ENCODE measurements at regions of chr1 and their contacts with region 1.

Region 1: GRCh38 chr1:64469977-64470664 is at the start of gene CACHD1:
- DNase-seq: peak; percentile 63
- H3K4me3 ChIP-seq: peak within 1 kb of the TSS; percentile 58 to 70 (median 67)
- H3K27ac ChIP-seq: peak within 1 kb of the TSS; percentile 76 to 89 (median 82)
- H3K4me1 ChIP-seq: peaks cover 4 to 31% (median 20%) of the 10 kb centered on the region in 4 donors
- H3K27me3 ChIP-seq: peaks cover 52% of the 10 kb centered on the region
- CTCF ChIP-seq: peak; percentile 17 to 32 (median 27)
- EP300 ChIP-seq: no peak
- POLR2A ChIP-seq: no peak
- total RNA-seq, gene CACHD1: 1.6 to 3.2 (median 2.2) TPM in 3 of 4 donors, not detected in the other

Region 2: GRCh38 chr1:64453688-64454087 is 16.4 kb before region 1 on chr1:
- in situ Hi-C with region 1: no loop called
- intact Hi-C with region 1: no loop called
- DNase-seq: no peak
- H3K4me3 ChIP-seq: no peak overlapping the region
- H3K27ac ChIP-seq: no peak overlapping the region
- H3K4me1 ChIP-seq: no peaks in the 10 kb centered on the region
- H3K27me3 ChIP-seq: no peaks in the 10 kb centered on the region
- CTCF ChIP-seq: no peak
- EP300 ChIP-seq: no peak
- POLR2A ChIP-seq: no peak

Region 3: DNA sequence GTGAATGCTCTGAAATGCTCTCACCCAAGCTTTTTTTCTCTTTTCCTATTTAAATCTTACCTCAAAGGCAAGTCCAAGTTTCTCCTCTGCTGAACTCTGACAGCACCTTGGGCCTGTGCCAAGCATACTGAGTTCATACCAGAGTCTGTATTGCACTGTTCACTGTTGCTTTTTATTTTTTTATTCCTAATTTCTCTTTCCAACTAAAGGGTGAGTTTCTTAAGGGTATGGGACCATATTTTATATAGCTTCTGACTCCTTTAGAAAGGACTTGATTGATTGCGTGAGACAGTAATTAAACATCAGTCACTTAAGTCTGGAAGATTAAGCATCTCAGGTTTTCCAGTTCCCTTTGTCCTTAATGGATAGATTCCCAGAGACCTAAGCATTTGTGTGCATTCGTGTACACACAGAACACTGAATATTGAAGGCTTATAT is 69.7 kb after region 1 on chr1:
- in situ Hi-C with region 1: no loop called
- intact Hi-C with region 1: loop called (anchors 10 kb)
- DNase-seq: peak; percentile 52
- H3K4me3 ChIP-seq: no peak overlapping the region
- H3K27ac ChIP-seq: peak overlapping the region; percentile 2 to 35 (median 27)
- H3K4me1 ChIP-seq: peaks cover 10 to 39% (median 24%) of the 10 kb centered on the region in 4 donors
- H3K27me3 ChIP-seq: no peaks in the 10 kb centered on the region
- CTCF ChIP-seq: no peak
- EP300 ChIP-seq: no peak
- POLR2A ChIP-seq: no peak

Region 4: GRCh38 chr1:64663668-64664067 is 193.5 kb after region 1 on chr1:
- in situ Hi-C with region 1: loop called in 2 of 4 experiments (anchors 25 kb)
- intact Hi-C with region 1: no loop called
- DNase-seq: no peak
- H3K4me3 ChIP-seq: no peak overlapping the region
- H3K27ac ChIP-seq: no peak overlapping the region
- H3K4me1 ChIP-seq: no peaks in the 10 kb centered on the region
- H3K27me3 ChIP-seq: no peaks in the 10 kb centered on the region
- CTCF ChIP-seq: no peak
- EP300 ChIP-seq: no peak
- POLR2A ChIP-seq: no peak

Region 5: DNA sequence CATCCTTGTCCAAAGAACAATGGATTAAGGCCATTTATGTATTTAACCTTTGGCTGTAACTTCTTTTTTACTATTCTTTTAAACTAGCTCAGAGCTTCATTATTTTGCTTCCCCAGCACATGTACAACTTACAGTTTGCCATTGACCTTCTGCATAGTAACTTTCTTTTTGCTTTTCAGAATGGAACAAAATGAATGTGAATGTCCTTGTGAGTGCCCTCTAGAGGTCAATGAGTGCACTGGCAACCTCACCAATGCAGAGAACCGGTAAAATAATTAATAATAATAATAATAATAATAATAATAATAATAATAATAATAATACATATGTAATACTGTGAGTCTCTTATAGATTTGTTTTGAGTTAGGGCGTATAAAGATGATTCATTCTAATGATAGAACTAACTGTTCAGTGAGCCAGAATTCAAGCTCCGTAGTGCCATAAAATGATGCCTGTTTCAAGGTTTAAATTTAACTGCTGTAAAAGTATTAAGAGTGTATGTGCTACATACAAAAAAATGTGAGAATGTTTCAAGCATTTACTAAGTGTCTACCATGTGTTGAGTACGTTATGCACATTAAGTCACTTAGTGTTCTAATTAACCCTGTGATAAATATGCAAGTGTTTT is 205.7 kb after region 1 on chr1:
- in situ Hi-C with region 1: loop called in 2 of 4 experiments (anchors 25 kb)
- intact Hi-C with region 1: loop called (anchors 2 kb)
- DNase-seq: no peak
- H3K4me3 ChIP-seq: no peak overlapping the region
- H3K27ac ChIP-seq: no peak overlapping the region
- H3K4me1 ChIP-seq: no peaks in the 10 kb centered on the region
- H3K27me3 ChIP-seq: no peaks in the 10 kb centered on the region
- CTCF ChIP-seq: peak; percentile 32 to 69 (median 60)
- EP300 ChIP-seq: no peak
- POLR2A ChIP-seq: no peak

Region 6: DNA sequence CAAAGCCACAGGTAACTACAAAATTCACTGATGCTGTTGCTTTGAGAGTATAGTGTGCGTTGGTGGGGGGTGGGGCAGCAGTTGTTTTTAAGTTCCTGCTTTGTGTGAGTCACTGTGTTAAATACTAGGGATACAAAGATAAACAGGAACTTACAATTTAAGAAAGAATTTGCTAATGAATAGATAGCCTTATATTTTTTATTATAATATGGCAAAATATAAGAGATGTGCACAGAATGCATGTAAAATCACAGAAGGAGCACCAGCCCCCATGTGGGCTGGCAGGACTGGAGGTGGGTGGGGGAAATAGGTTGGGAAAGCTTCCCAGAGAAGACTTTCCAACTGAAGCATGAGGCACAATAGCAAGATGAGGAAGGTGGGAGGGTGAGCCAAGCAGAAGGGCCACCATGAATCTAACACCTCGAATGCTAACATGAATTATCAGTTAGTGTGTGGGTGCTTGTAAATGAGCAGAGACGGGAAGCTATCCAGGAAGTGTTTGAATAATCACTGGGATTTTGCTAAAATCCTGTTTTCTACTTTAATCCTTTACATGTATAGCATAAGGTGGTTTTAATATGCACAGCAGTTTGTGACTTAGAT is 217.7 kb after region 1 on chr1:
- in situ Hi-C with region 1: no loop called
- intact Hi-C with region 1: no loop called
- DNase-seq: peak; percentile 11
- H3K4me3 ChIP-seq: no peak overlapping the region
- H3K27ac ChIP-seq: no peak overlapping the region
- H3K4me1 ChIP-seq: peaks cover 0 to 12% (median 8%) of the 10 kb centered on the region in 4 donors
- H3K27me3 ChIP-seq: no peaks in the 10 kb centered on the region
- CTCF ChIP-seq: no peak
- EP300 ChIP-seq: no peak
- POLR2A ChIP-seq: no peak